Activated naive CD4-positive, alpha-beta T cell treated with anti-CD3 and anti-CD28 coated beads, Interleukin-2, amount 10 ng/mL, durations not matched to agents 7 days and 5 days (primary cell): ENCODE measurements at regions of chr3 and their contacts with region 1.

Region 1: GRCh38 chr3:184229394-184230080 is at the start of gene VWA5B2:
- DNase-seq: peak; percentile 74
- H3K4me3 Mint-ChIP-seq: peak within 1 kb of the TSS; percentile 53
- H3K27ac Mint-ChIP-seq: no peak within 1 kb of the TSS
- H3K4me1 Mint-ChIP-seq: peaks cover 9% of the 10 kb centered on the region
- H3K27me3 Mint-ChIP-seq: peaks cover 93% of the 10 kb centered on the region

Region 2: GRCh38 chr3:184196536-184196935 is 33.0 kb before region 1 on chr3:
- CTCF ChIA-PET with region 1: interaction called, 15 read pairs
- DNase-seq: no peak
- H3K4me3 Mint-ChIP-seq: no peak overlapping the region
- H3K27ac Mint-ChIP-seq: no peak overlapping the region
- H3K4me1 Mint-ChIP-seq: no peaks in the 10 kb centered on the region
- H3K27me3 Mint-ChIP-seq: peaks cover 3% of the 10 kb centered on the region

Region 3: DNA sequence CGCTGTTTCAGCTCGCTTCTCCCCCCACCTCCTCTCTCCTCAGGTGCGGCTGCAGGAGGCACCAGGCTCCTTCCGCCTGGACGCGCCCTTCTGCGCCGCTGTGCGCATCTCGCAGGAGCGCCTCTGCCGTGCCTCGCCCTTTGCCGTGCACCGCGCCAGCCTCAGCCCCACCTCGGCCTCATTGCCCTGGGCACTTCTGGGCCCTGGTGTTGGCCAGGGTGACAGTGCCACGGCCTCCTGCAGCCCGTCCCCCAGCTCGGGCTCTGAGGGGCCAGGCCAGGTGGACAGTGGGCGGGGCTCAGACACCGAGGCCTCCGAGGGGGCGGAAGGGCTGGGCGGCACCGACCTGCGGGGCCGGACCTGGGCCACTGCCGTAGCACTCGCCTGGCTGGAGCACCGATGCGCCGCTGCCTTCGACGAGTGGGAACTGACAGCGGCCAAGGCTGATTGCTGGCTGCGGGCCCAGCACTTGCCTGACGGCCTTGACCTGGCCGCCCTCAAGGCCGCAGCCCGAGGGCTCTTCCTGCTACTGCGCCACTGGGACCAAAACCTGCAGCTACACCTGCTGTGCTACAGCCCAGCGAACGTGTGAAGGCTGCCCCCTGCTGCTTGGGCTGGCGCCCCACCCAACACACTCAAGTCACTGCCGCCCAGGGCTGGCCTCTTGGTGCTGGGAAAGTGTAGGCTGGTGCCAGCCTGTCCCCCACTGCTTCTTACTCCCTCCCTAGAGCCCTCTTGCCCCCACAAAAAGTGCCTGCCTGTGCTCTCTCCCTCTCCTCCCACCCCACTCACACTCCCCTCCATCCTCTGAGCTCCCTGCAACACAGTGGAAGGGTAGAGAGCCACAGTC is 12.1 kb after region 1 on chr3:
- CTCF ChIA-PET with region 1: interaction called, 58 read pairs
- DNase-seq: peak; percentile 35
- H3K4me3 Mint-ChIP-seq: no peak overlapping the region
- H3K27ac Mint-ChIP-seq: no peak overlapping the region
- H3K4me1 Mint-ChIP-seq: peaks cover 3% of the 10 kb centered on the region
- H3K27me3 Mint-ChIP-seq: peaks cover 5% of the 10 kb centered on the region

Region 4: GRCh38 chr3:184255291-184256039 is 25.9 kb after region 1 on chr3:
- CTCF ChIA-PET with region 1: interaction called, 26 read pairs
- DNase-seq: no peak
- H3K4me3 Mint-ChIP-seq: no peak overlapping the region
- H3K27ac Mint-ChIP-seq: no peak overlapping the region
- H3K4me1 Mint-ChIP-seq: peaks cover 16% of the 10 kb centered on the region
- H3K27me3 Mint-ChIP-seq: peaks cover 30% of the 10 kb centered on the region

Region 5: DNA sequence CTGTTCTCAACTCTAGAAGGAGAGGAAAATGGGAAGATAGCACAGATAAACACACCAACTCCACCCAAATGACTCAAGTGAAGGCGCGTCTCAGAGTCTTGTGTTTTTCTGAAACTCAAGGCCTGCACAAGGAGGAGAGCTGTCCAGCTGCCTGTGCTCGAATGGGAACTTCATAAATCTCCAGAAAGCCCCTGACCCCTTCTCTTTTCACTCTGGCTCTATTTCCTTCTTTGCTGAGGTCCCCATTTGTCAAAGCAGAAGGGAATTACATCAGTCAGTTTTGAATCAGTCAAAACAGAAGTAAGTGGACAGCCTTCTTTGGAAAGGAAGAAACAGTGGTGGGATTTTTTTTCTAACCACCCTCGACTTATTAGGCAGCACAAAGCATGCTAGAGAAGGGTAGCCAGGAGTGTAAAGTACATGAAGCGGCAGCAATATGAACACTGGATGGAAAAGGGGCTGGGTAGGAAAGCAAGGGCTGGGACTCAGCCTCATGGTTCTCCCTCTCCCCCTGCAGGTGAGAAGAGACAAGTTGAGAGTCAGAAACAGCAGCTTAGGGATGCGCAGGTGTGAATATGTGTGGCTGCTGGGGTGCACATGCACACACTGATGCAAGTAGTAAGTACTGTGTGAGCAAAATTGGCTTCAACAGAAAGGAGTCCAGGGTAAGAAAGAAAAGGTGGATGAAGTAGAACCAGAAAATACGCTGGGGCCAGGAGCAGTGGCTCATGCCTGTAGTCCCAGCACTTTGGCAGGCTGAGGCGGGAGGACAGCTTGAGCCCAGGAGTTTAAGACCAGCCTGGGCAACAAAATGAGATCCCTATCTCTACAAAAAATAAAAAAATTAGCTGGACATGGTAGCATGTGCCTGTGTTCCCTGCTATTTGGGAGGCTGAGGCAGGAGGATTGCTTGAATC is 518.9 kb after region 1 on chr3:
- CTCF ChIA-PET with region 1: no interaction called
- DNase-seq: no peak
- H3K4me3 Mint-ChIP-seq: no peak overlapping the region
- H3K27ac Mint-ChIP-seq: no peak overlapping the region
- H3K4me1 Mint-ChIP-seq: no peaks in the 10 kb centered on the region
- H3K27me3 Mint-ChIP-seq: peaks cover 30% of the 10 kb centered on the region